ENCODE measurements at regions of chr17 and their contacts with region 1.

Region 1: GRCh38 chr17:78697554-78698343 is 84.3 kb downstream of the CYTH1 start:
- DNase-seq: no peak
- ATAC-seq: peak; percentile 67
- H3K4me3 ChIP-seq: peak overlapping the region; percentile 25; the same call in 1 of the 2 replicates
- H3K27ac ChIP-seq: peak overlapping the region; percentile 97
- H3K4me1 ChIP-seq: peaks cover 55% of the 10 kb centered on the region
- H3K27me3 ChIP-seq: no peaks in the 10 kb centered on the region
- CTCF ChIP-seq: no peak
- EP300 ChIP-seq: no peak
- POLR2A ChIP-seq: peak; percentile 66
- RAD21 ChIP-seq: no peak

Region 2: DNA sequence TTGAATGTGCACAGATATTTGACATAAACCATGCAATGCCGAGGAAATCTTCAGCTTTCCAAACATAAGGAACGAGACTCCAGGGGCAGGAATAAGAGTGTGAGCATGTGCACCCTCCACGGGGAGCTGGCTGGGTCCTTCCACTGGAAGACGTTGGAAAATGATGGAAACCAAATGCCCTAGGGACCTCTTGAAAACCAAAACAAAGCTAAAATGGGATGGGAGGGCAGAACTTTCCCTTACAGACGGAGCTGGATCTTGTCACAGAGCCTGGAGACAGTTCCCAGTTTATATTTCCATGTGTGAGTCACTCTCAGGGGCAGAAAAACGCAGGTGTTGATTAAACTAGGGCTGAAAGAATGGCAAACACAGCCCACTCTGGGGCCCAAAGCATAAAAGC is 86.1 kb before region 1 on chr17:
- CTCF ChIA-PET with region 1: no interaction called
- POLR2A ChIA-PET with region 1: no interaction called
- RAD21 ChIA-PET with region 1: no interaction called
- SMC1A ChIA-PET with region 1: no interaction called
- in situ Hi-C with region 1: no loop called
- intact Hi-C with region 1: no loop called
- DNase-seq: no peak
- ATAC-seq: no peak
- H3K4me3 ChIP-seq: no peak overlapping the region
- H3K27ac ChIP-seq: no peak overlapping the region
- H3K4me1 ChIP-seq: no peaks in the 10 kb centered on the region
- H3K27me3 ChIP-seq: no peaks in the 10 kb centered on the region; a peak in 1 of 4 replicates
- CTCF ChIP-seq: no peak
- EP300 ChIP-seq: no peak
- POLR2A ChIP-seq: no peak
- RAD21 ChIP-seq: no peak

Region 3: GRCh38 chr17:78716814-78717393 is 19.2 kb after region 1 on chr17:
- CTCF ChIA-PET with region 1: interaction called, 8 read pairs
- POLR2A ChIA-PET with region 1: interaction called, 15 read pairs
- RAD21 ChIA-PET with region 1: interaction called, 21 read pairs
- SMC1A ChIA-PET with region 1: interaction called, 98 read pairs
- in situ Hi-C with region 1: no loop called
- intact Hi-C with region 1: no loop called
- DNase-seq: no peak
- ATAC-seq: peak; percentile 63
- H3K4me3 ChIP-seq: peak overlapping the region; percentile 37
- H3K27ac ChIP-seq: peak overlapping the region; percentile 87
- H3K4me1 ChIP-seq: peaks cover 63% of the 10 kb centered on the region
- H3K27me3 ChIP-seq: no peaks in the 10 kb centered on the region
- CTCF ChIP-seq: no peak
- EP300 ChIP-seq: no peak
- POLR2A ChIP-seq: peak; percentile 26
- RAD21 ChIP-seq: no peak

Region 4: DNA sequence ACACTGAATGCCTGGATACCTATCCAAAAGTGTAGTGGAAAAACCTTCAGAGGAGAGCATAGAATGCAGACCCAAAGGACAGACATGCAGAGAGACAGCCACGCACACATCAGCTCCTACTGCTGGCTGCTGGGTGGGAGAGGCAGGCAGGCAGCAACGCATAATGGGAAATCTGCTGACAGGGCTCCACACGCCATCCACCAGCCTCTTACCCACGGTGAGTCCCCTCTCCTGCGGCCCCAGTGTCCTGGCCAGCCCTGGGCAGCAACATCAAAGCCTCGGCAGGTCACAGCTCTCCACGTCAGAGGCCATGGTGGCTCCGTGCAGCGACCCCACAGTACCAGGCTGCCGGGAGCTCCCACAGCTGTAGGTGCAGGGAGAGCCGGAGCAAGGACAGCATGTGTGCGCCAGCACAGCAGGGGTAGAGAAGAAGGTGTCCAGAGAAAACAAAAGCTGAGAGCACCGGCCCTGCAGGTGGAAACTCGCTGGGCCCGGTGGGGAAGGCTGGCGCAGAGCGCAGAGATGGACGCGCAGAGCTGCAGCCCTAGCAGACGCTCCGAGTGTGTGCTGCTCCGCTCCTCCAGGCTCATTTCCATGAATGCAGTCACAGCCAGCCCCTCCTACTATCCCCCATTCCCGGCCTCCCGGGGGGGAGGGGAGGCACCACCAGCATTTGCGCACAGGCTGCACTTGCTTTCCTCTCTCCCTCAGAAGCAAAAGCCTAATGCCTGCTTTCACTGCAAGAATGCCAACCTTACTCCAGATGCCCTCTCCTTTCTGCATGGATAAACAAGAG is 25.4 kb after region 1 on chr17:
- CTCF ChIA-PET with region 1: interaction called, 3 read pairs
- POLR2A ChIA-PET with region 1: interaction called, 7 read pairs
- RAD21 ChIA-PET with region 1: interaction called, 21 read pairs
- SMC1A ChIA-PET with region 1: interaction called, 5 read pairs
- in situ Hi-C with region 1: no loop called
- intact Hi-C with region 1: no loop called
- DNase-seq: no peak
- ATAC-seq: no peak
- H3K4me3 ChIP-seq: peak overlapping the region; percentile 56
- H3K27ac ChIP-seq: peak overlapping the region; percentile 74
- H3K4me1 ChIP-seq: peaks cover 90% of the 10 kb centered on the region
- H3K27me3 ChIP-seq: no peaks in the 10 kb centered on the region
- CTCF ChIP-seq: no peak
- EP300 ChIP-seq: no peak
- POLR2A ChIP-seq: peak; percentile 30; the same call in 1 of the 2 replicates
- RAD21 ChIP-seq: no peak

Region 5: GRCh38 chr17:78729641-78730040 is 31.9 kb after region 1 on chr17:
- CTCF ChIA-PET with region 1: interaction called, 3 read pairs
- POLR2A ChIA-PET with region 1: interaction called, 12 read pairs
- RAD21 ChIA-PET with region 1: interaction called, 12 read pairs
- SMC1A ChIA-PET with region 1: interaction called, 5 read pairs
- in situ Hi-C with region 1: no loop called
- intact Hi-C with region 1: no loop called
- DNase-seq: no peak
- ATAC-seq: 0 out of 3 replicates have a peak, but pooled peaks have one; percentile 4
- H3K4me3 ChIP-seq: peak overlapping the region; percentile 67
- H3K27ac ChIP-seq: peak overlapping the region; percentile 74
- H3K4me1 ChIP-seq: peaks cover 55% of the 10 kb centered on the region
- H3K27me3 ChIP-seq: no peaks in the 10 kb centered on the region
- CTCF ChIP-seq: no peak
- EP300 ChIP-seq: no peak
- POLR2A ChIP-seq: no peak
- RAD21 ChIP-seq: no peak